ENCODE measurements at regions of chr10 and their contacts with region 1.

Region 1: DNA sequence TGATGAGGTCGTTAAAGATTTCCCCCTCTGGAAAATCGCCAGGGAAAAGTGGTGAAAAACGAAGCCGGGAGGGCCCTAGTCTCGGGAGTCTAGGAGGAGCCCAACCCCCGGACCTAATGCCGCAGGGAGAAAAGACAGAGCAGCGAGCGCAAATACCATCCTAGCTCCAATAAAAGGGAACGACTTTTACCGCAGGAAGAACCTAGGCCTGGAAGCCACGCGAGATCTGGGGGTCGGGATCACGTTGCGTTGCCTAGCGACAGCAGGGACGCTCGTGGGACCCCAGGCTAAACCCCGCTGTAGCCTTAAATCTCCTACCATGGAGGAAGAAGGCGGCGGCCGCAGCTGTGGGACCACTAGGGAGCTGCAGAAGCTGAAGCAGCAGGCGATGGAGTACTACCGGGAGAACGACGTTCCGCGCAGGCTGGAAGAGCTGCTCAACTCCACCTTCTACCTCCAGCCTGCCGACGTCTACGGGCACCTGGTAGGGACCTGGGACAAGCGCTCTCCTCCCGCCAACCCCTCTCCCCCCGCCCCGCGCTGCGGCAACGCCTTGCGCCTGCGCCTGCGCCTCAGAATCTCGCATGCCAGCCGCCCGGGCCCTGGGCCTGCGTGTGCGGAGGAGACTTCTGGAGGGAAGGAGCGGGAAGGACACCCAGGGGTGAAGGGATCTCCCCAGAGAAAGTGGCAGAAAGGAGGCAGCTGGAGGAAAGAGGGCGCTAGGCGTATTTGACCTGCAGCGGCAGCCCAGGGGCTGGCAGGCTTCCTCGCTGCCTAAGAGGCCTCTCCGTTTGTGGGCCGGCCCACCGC is at the start of gene ENO4:
- DNase-seq: peak; percentile 44
- ATAC-seq: peak; percentile 58
- H3K4me3 Mint-ChIP-seq: peak within 1 kb of the TSS; percentile 86
- H3K27ac Mint-ChIP-seq: peak within 1 kb of the TSS; percentile 90
- H3K4me1 Mint-ChIP-seq: peaks cover 39% of the 10 kb centered on the region
- H3K27me3 Mint-ChIP-seq: peaks cover 13% of the 10 kb centered on the region
- CTCF ChIP-seq: no peak
- total RNA-seq, gene ENO4: 0.07 TPM in 1 of 2 replicates, not detected in the other

Region 2: GRCh38 chr10:115981081-115981480 is 868.4 kb before region 1 on chr10:
- CTCF ChIA-PET with region 1: no interaction called
- POLR2A ChIA-PET with region 1: no interaction called
- intact Hi-C with region 1: no loop called
- DNase-seq: no peak
- ATAC-seq: no peak
- H3K4me3 Mint-ChIP-seq: no peak overlapping the region
- H3K27ac Mint-ChIP-seq: no peak overlapping the region
- H3K4me1 Mint-ChIP-seq: no peaks in the 10 kb centered on the region
- H3K27me3 Mint-ChIP-seq: no peaks in the 10 kb centered on the region
- CTCF ChIP-seq: no peak

Region 3: GRCh38 chr10:116796910-116797513 is 52.4 kb before region 1 on chr10:
- CTCF ChIA-PET with region 1: no interaction called
- POLR2A ChIA-PET with region 1: no interaction called
- intact Hi-C with region 1: loop called (anchors 1 kb)
- DNase-seq: peak; percentile 31
- ATAC-seq: no peak
- H3K4me3 Mint-ChIP-seq: no peak overlapping the region
- H3K27ac Mint-ChIP-seq: no peak overlapping the region
- H3K4me1 Mint-ChIP-seq: no peaks in the 10 kb centered on the region
- H3K27me3 Mint-ChIP-seq: peaks cover 6% of the 10 kb centered on the region
- CTCF ChIP-seq: no peak

Region 4: DNA sequence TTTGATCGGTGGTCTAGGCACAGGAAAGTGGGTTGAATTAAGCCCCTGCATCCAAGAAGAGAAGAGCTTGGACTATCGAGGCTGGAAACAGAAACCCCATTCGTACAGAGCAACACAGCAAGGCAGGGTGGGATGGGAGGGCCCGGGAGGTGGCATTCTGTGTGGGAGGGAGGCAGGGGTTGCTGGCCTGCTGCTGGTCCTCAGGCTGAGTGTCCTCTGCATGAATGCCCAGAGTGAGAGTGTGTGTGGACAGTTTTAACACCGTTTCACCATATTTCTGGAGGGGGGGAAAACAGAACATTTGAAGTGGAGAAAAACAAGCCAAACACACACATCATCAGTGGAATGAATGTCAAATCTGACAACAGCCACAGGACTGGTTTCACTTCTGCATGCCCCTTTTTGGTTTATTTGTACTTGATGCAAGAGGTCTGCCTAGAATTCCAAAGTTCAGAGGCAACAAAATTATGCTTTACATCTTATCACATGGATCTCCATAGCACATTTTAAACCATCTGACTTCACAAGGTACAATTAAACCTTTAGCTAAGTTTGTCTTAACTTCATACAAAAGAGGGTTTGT is 11.2 kb before region 1 on chr10:
- CTCF ChIA-PET with region 1: no interaction called
- POLR2A ChIA-PET with region 1: no interaction called
- intact Hi-C with region 1: loop called (anchors 1 kb)
- DNase-seq: no peak
- ATAC-seq: peak; percentile 60
- H3K4me3 Mint-ChIP-seq: no peak overlapping the region
- H3K27ac Mint-ChIP-seq: peak overlapping the region; percentile 1
- H3K4me1 Mint-ChIP-seq: peaks cover 17% of the 10 kb centered on the region
- H3K27me3 Mint-ChIP-seq: no peaks in the 10 kb centered on the region
- CTCF ChIP-seq: no peak

Region 5: DNA sequence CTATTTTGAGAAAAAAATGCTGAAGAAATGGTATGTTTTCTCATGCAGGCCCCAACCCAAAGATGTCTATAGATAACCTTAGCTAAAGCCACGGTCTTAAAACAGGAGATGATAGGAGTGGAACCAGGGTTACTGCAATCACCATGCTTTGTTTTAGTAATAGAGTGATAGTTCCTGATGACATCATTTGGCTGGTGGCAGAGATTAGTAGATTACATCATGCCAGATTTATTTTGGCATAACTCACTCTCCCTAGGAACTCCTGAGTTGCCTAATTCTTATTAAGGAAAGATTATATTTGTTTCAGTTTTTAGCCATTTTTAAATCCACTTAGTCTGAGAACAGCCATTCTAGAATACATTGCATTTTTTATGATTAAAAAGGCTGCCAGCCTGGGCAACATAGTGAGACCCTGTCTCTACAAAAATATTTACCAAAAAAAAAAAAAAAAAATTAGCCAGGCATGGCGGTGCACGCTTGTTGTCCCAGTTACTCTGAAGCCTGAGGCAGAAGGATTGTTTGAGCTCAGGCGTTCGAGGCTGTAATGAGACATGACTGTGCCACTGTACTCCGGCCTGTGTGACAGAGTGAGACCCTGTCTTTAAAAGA is 17.6 kb after region 1 on chr10:
- CTCF ChIA-PET with region 1: no interaction called
- POLR2A ChIA-PET with region 1: no interaction called
- intact Hi-C with region 1: no loop called
- DNase-seq: no peak
- ATAC-seq: no peak
- H3K4me3 Mint-ChIP-seq: no peak overlapping the region
- H3K27ac Mint-ChIP-seq: no peak overlapping the region
- H3K4me1 Mint-ChIP-seq: no peaks in the 10 kb centered on the region
- H3K27me3 Mint-ChIP-seq: no peaks in the 10 kb centered on the region
- CTCF ChIP-seq: no peak

Region 6: GRCh38 chr10:117375360-117376178 is 526.1 kb after region 1 on chr10 and contains the start of gene PDZD8:
- CTCF ChIA-PET with region 1: no interaction called
- POLR2A ChIA-PET with region 1: interaction called, 4 read pairs
- intact Hi-C with region 1: loop called (anchors 2 kb)
- DNase-seq: peak; percentile 96
- ATAC-seq: peak; percentile 89
- H3K4me3 Mint-ChIP-seq: peak within 1 kb of the TSS; percentile 93
- H3K27ac Mint-ChIP-seq: peak within 1 kb of the TSS; percentile 75
- H3K4me1 Mint-ChIP-seq: peaks cover 35% of the 10 kb centered on the region
- H3K27me3 Mint-ChIP-seq: peaks cover 17% of the 10 kb centered on the region
- CTCF ChIP-seq: no peak
- total RNA-seq, gene PDZD8: 13.2 and 13.7 TPM in 2 replicates

Region 7: GRCh38 chr10:118046395-118047156 is 1197.1 kb after region 1 on chr10 and contains the start of gene RAB11FIP2:
- CTCF ChIA-PET with region 1: no interaction called
- POLR2A ChIA-PET with region 1: no interaction called
- intact Hi-C with region 1: loop called (anchors 10 kb)
- DNase-seq: peak; percentile 98
- ATAC-seq: peak; percentile 92
- H3K4me3 Mint-ChIP-seq: peak within 1 kb of the TSS; percentile 89
- H3K27ac Mint-ChIP-seq: peak within 1 kb of the TSS; percentile 66
- H3K4me1 Mint-ChIP-seq: peaks cover 38% of the 10 kb centered on the region
- H3K27me3 Mint-ChIP-seq: no peaks in the 10 kb centered on the region
- CTCF ChIP-seq: no peak
- total RNA-seq, gene RAB11FIP2: 20.4 and 33.2 TPM in 2 replicates

Measured in activated B cell treated with CpG ODN at 0.5 μM for 24 hours (primary cell).